Aorta (tissue), 5 donors: ENCODE measurements at regions of chr5 and their contacts with region 1.

Region 1: GRCh38 chr5:16456103-16456832 is 9.3 kb downstream of the ZNF622 start:
- DNase-seq: peak in 1 of 2 donors; percentile 60
- ATAC-seq: peak; percentile 74
- H3K4me3 ChIP-seq: no peak overlapping the region
- H3K27ac ChIP-seq: no peak overlapping the region
- H3K4me1 ChIP-seq: peaks cover 0 to 1% of the 10 kb centered on the region in 2 donors
- H3K27me3 ChIP-seq: no peaks in the 10 kb centered on the region

Region 2: DNA sequence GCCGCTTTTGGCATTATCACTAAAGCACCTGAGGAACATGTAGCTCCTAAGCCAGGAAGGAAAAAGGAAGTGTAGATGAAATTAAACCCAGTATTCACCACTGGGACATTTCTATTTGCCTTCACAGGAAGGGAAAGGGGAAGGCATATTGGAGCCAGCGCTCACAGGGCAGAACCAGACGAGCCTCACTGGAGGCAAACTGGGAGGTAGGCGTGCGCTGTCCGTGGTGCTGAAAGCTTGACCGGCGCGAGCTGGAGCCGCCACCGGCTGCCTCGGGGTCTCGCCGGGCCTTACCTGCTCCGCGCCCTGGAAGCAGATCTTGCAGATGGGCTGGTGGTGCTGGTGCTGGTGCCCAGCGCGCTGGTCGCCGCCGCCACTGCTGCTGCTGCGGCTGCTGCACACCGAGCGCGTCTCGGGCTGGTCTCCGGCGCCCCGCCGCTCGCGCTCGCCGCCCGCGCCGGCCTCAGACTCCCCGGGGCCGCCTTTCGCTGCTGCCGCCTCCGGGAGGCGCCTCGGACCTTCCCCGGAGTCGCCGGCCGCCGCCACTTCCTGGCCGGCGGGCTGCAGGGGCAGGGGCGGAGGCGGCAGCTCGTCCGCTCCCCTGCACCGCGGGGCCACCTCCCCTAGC is 277.4 kb before region 1 on chr5:
- intact Hi-C with region 1: loop called in 1 of 2 experiments (anchors 10 kb)
- DNase-seq: peak; percentile 61 to 87
- ATAC-seq: peak; percentile 46
- H3K4me3 ChIP-seq: peak overlapping the region in 1 of 2 donors; percentile 28
- H3K27ac ChIP-seq: no peak overlapping the region
- H3K4me1 ChIP-seq: no peaks in the 10 kb centered on the region
- H3K27me3 ChIP-seq: peaks cover 0 to 2% of the 10 kb centered on the region in 2 donors

Region 3: DNA sequence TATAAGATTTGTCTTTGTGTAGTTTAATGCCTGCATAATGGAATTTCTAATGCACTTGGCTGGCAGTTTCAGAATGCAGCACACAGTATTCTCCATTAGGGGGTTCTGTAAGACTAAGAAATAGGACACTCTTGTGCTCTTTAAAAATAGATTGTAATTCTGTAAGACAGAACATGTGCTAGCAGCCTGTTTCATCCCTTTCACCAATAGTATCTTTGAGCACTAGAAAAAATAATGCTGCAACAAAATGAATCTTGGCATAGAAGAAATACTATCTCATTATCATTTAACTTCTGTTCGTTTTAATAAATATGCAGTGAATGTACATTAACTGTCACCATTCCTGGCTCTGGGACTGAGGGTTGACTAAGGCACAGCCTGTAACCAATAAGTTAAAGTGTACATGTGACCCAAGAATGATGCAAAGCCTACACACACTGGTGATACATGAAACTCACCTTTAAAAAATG is 33.1 kb after region 1 on chr5:
- intact Hi-C with region 1: no loop called
- DNase-seq: no peak
- ATAC-seq: peak; percentile 77
- H3K4me3 ChIP-seq: no peak overlapping the region
- H3K27ac ChIP-seq: no peak overlapping the region
- H3K4me1 ChIP-seq: no peaks in the 10 kb centered on the region
- H3K27me3 ChIP-seq: no peaks in the 10 kb centered on the region

Region 4: DNA sequence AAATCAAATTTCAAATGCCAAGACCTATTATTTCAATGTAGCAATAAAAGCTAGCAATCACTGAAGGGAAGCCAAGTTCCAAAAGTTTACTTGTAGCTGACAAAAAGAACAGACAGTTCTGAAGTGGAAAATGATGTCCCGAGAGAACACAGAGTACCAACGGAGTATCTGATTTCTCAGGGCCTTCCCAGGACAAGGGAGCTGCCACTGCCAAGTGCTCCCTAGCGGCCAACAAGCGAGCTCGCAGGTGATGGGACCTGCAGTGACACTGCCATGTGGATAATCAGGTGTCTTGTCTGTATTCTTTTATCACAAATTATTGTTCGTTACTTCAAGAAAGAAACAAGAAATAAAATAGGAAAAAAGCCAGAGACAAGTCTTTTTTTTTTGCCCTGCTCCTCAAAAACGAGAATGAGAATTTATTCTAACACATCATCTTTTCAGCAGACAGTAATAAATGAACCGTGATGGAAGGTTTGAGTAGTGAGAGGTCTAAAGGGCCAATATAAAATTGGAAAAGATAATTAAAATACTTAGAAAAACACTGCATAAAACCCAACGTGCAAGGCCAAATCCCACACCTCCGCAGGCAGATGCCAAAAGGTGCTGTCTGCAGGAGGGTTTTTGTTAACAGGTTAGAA is 320.5 kb after region 1 on chr5:
- intact Hi-C with region 1: no loop called
- DNase-seq: no peak
- ATAC-seq: no peak
- H3K4me3 ChIP-seq: no peak overlapping the region
- H3K27ac ChIP-seq: no peak overlapping the region
- H3K4me1 ChIP-seq: no peaks in the 10 kb centered on the region
- H3K27me3 ChIP-seq: no peaks in the 10 kb centered on the region